ENCODE measurements at regions of chr3 and their contacts with region 1.

Region 1: GRCh38 chr3:184229394-184230080 is at the start of gene VWA5B2:
- DNase-seq: peak; percentile 60
- H3K4me3 ChIP-seq: peak within 1 kb of the TSS in 1 of 3 experiments; percentile 25
- H3K27ac ChIP-seq: no peak within 1 kb of the TSS
- H3K4me1 ChIP-seq: peaks cover 4% of the 10 kb centered on the region
- H3K27me3 ChIP-seq: peaks cover 38 to 57% of the 10 kb centered on the region in 2 experiments
- CTCF ChIP-seq: peak in 1 of 2 donors; percentile 34
- POLR2A ChIP-seq: no peak
- total RNA-seq, gene VWA5B2: not detected in 2 replicates

Region 2: GRCh38 chr3:183895296-183895695 is 334.2 kb before region 1 on chr3:
- CTCF ChIA-PET with region 1: interaction called, 34 read pairs
- POLR2A ChIA-PET with region 1: no interaction called
- dilution Hi-C with region 1: no loop called
- intact Hi-C with region 1: no loop called
- DNase-seq: peak; percentile 43
- H3K4me3 ChIP-seq: no peak overlapping the region
- H3K27ac ChIP-seq: no peak overlapping the region
- H3K4me1 ChIP-seq: no peaks in the 10 kb centered on the region
- H3K27me3 ChIP-seq: peaks cover 6 to 13% of the 10 kb centered on the region in 2 experiments
- CTCF ChIP-seq: peak; percentile 75 to 78
- POLR2A ChIP-seq: no peak

Region 3: GRCh38 chr3:184185461-184186308 is 43.9 kb before region 1 on chr3 and contains the start of gene ABCF3:
- CTCF ChIA-PET with region 1: interaction called, 25 read pairs
- POLR2A ChIA-PET with region 1: no interaction called
- dilution Hi-C with region 1: no loop called
- intact Hi-C with region 1: loop called (anchors 5 kb)
- DNase-seq: peak; percentile 99
- H3K4me3 ChIP-seq: peak within 1 kb of the TSS; percentile 5 to 92 (median 54)
- H3K27ac ChIP-seq: peak within 1 kb of the TSS; percentile 64
- H3K4me1 ChIP-seq: peaks cover 14% of the 10 kb centered on the region
- H3K27me3 ChIP-seq: no peaks in the 10 kb centered on the region
- CTCF ChIP-seq: no peak
- POLR2A ChIP-seq: peak; percentile 87
- total RNA-seq, gene ABCF3: 65.6 and 68.8 TPM in 2 replicates

Region 4: GRCh38 chr3:184209146-184209923 is 20.2 kb before region 1 on chr3:
- CTCF ChIA-PET with region 1: interaction called, 65 read pairs
- POLR2A ChIA-PET with region 1: interaction called, 4 read pairs
- dilution Hi-C with region 1: no loop called
- intact Hi-C with region 1: no loop called
- DNase-seq: no peak
- H3K4me3 ChIP-seq: no peak overlapping the region
- H3K27ac ChIP-seq: no peak overlapping the region
- H3K4me1 ChIP-seq: no peaks in the 10 kb centered on the region
- H3K27me3 ChIP-seq: peaks cover 7 to 11% of the 10 kb centered on the region in 2 experiments
- CTCF ChIP-seq: no peak
- POLR2A ChIP-seq: no peak

Region 5: DNA sequence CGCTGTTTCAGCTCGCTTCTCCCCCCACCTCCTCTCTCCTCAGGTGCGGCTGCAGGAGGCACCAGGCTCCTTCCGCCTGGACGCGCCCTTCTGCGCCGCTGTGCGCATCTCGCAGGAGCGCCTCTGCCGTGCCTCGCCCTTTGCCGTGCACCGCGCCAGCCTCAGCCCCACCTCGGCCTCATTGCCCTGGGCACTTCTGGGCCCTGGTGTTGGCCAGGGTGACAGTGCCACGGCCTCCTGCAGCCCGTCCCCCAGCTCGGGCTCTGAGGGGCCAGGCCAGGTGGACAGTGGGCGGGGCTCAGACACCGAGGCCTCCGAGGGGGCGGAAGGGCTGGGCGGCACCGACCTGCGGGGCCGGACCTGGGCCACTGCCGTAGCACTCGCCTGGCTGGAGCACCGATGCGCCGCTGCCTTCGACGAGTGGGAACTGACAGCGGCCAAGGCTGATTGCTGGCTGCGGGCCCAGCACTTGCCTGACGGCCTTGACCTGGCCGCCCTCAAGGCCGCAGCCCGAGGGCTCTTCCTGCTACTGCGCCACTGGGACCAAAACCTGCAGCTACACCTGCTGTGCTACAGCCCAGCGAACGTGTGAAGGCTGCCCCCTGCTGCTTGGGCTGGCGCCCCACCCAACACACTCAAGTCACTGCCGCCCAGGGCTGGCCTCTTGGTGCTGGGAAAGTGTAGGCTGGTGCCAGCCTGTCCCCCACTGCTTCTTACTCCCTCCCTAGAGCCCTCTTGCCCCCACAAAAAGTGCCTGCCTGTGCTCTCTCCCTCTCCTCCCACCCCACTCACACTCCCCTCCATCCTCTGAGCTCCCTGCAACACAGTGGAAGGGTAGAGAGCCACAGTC is 12.1 kb after region 1 on chr3:
- CTCF ChIA-PET with region 1: interaction called, 98 read pairs
- POLR2A ChIA-PET with region 1: no interaction called
- dilution Hi-C with region 1: no loop called
- intact Hi-C with region 1: no loop called
- DNase-seq: peak; percentile 48
- H3K4me3 ChIP-seq: no peak overlapping the region
- H3K27ac ChIP-seq: no peak overlapping the region
- H3K4me1 ChIP-seq: no peaks in the 10 kb centered on the region
- H3K27me3 ChIP-seq: no peaks in the 10 kb centered on the region
- CTCF ChIP-seq: peak; percentile 50 to 83
- POLR2A ChIP-seq: no peak

Region 6: GRCh38 chr3:184289426-184289938 is 59.9 kb after region 1 on chr3:
- CTCF ChIA-PET with region 1: interaction called, 19 read pairs
- POLR2A ChIA-PET with region 1: no interaction called
- dilution Hi-C with region 1: no loop called
- intact Hi-C with region 1: loop called (anchors 1 kb)
- DNase-seq: peak; percentile 52
- H3K4me3 ChIP-seq: no peak overlapping the region
- H3K27ac ChIP-seq: no peak overlapping the region
- H3K4me1 ChIP-seq: no peaks in the 10 kb centered on the region
- H3K27me3 ChIP-seq: peaks cover 0 to 3% of the 10 kb centered on the region in 2 experiments
- CTCF ChIP-seq: peak; percentile 67
- POLR2A ChIP-seq: no peak

Region 7: GRCh38 chr3:184305577-184305976 is 76.0 kb after region 1 on chr3:
- CTCF ChIA-PET with region 1: no interaction called
- POLR2A ChIA-PET with region 1: no interaction called
- dilution Hi-C with region 1: no loop called
- intact Hi-C with region 1: no loop called
- DNase-seq: peak; percentile 42
- H3K4me3 ChIP-seq: no peak overlapping the region
- H3K27ac ChIP-seq: no peak overlapping the region
- H3K4me1 ChIP-seq: peaks cover 3% of the 10 kb centered on the region
- H3K27me3 ChIP-seq: no peaks in the 10 kb centered on the region
- CTCF ChIP-seq: peak; percentile 23 to 29
- POLR2A ChIP-seq: no peak

Region 8: DNA sequence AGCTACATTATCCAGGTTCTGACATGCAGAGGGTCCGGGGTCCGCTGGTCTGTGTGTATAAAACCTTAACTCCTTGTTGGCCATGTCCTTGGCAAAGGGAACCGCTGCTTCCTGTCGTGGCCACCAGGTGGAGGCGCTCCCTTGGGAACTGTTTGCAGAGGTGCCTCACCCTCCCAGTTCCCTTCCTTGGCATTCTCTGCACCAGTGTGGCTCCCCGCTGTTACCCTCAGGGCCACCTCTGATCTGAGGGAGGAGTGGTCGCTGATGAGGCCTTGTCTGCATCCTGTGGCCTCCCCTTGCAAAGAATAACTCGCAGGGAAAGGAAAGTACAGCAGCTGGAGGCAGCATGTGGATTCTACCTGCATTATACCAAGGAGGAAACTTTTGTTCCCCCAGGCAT is 239.9 kb after region 1 on chr3:
- CTCF ChIA-PET with region 1: no interaction called
- POLR2A ChIA-PET with region 1: no interaction called
- dilution Hi-C with region 1: no loop called
- intact Hi-C with region 1: no loop called
- DNase-seq: peak; percentile 42
- H3K4me3 ChIP-seq: no peak overlapping the region
- H3K27ac ChIP-seq: no peak overlapping the region
- H3K4me1 ChIP-seq: peaks cover 17% of the 10 kb centered on the region
- H3K27me3 ChIP-seq: peaks cover 2 to 16% of the 10 kb centered on the region in 2 experiments
- CTCF ChIP-seq: peak; percentile 75 to 76
- POLR2A ChIP-seq: no peak

Region 9: GRCh38 chr3:184884359-184885017 is 655.0 kb after region 1 on chr3:
- CTCF ChIA-PET with region 1: no interaction called
- POLR2A ChIA-PET with region 1: no interaction called
- dilution Hi-C with region 1: no loop called
- intact Hi-C with region 1: no loop called
- DNase-seq: no peak
- H3K4me3 ChIP-seq: no peak overlapping the region
- H3K27ac ChIP-seq: no peak overlapping the region
- H3K4me1 ChIP-seq: no peaks in the 10 kb centered on the region
- H3K27me3 ChIP-seq: no peaks in the 10 kb centered on the region
- CTCF ChIP-seq: no peak
- POLR2A ChIP-seq: no peak

Measured in endothelial cell of umbilical vein (primary cell).